A549 (cell line): ENCODE measurements at regions of chr14 and their contacts with region 1.

Region 1: DNA sequence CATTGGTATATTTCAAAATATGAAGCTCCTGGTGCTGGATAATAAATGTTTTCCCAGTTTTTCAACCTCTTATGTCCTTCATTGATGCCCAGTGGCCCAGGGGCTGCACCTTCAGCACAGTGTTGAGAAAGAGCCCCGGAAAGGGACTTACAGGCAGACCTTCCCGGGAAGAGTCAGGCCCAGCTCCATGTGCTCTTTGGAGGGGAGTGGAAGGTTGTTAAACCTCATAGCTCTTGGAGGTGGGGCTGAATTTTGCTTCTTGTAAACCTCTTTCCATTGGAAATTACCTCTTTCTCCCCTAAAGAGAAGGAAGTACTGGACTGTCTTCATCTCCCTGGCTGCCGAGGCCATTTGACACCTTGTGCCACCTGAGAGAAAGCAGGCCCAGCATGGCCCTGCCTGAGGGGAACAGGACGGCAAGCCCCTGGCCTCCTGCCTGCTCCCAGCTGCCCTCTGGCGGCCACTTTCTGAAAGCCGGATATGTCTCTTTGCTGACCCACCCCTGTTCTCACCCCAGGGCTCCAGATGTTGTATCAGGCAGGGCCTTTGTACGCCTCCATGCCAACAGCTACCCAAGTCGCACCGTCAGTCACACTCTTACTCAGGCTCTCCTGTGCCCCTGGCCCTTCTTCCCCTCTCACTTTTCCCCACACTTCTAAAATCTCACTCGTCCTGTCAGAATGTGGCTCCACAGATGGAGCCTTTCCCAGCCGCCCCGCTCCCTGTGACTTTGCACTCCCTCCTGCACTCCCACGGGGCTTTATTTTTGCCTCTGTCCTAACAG is 43.0 kb downstream of the EVL start:
- DNase-seq: peak; percentile 69 to 88
- ATAC-seq: peak; percentile 91 to 98
- H3K4me3 ChIP-seq: no peak overlapping the region
- H3K27ac ChIP-seq: peak overlapping the region; percentile 51 to 56; a peak in 4 of 6 replicates
- H3K4me1 ChIP-seq: peaks cover 27% of the 10 kb centered on the region
- CTCF ChIP-seq: peak; percentile 90
- EP300 ChIP-seq: no peak
- POLR2A ChIP-seq: no peak
- RAD21 ChIP-seq: peak; percentile 86 to 88

Region 2: GRCh38 chr14:99850709-99851108 is 257.5 kb before region 1 on chr14:
- CTCF ChIA-PET with region 1: no interaction called
- POLR2A ChIA-PET with region 1: no interaction called
- DNase-seq: no peak
- ATAC-seq: no peak
- H3K4me3 ChIP-seq: no peak overlapping the region
- H3K27ac ChIP-seq: no peak overlapping the region
- H3K4me1 ChIP-seq: peaks cover 4% of the 10 kb centered on the region; the same call in 1 of the 3 replicates
- CTCF ChIP-seq: no peak
- EP300 ChIP-seq: no peak
- POLR2A ChIP-seq: no peak
- RAD21 ChIP-seq: no peak

Region 3: DNA sequence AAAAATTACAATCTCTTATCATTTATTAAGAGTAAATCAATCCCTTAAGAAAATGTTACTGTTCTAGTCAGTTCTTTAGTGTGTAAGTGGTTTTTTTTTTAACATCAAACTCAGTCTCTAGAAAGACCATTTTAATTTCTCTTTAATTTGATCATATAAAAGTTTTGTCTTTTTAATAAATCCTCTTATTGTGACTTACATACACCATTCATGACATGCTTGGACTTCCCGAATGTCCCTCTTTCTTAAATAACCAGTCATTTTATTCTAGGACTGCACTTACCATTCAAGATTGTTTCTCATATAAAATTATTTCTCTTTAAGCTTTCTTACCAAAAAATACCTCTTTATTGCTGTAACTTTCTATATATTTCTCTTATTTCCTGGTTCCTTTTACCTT is 103.8 kb before region 1 on chr14:
- CTCF ChIA-PET with region 1: interaction called, 11 read pairs
- POLR2A ChIA-PET with region 1: no interaction called
- DNase-seq: peak in 1 of 2 experiments; percentile 51
- ATAC-seq: no peak
- H3K4me3 ChIP-seq: no peak overlapping the region
- H3K27ac ChIP-seq: no peak overlapping the region
- H3K4me1 ChIP-seq: no peaks in the 10 kb centered on the region
- CTCF ChIP-seq: no peak
- EP300 ChIP-seq: no peak
- POLR2A ChIP-seq: no peak
- RAD21 ChIP-seq: no peak

Region 4: GRCh38 chr14:100031536-100032281 is 76.5 kb before region 1 on chr14:
- CTCF ChIA-PET with region 1: interaction called, 29 read pairs
- POLR2A ChIA-PET with region 1: no interaction called
- DNase-seq: peak; percentile 91 to 96
- ATAC-seq: peak; percentile 91 to 93
- H3K4me3 ChIP-seq: peak overlapping the region; percentile 41
- H3K27ac ChIP-seq: peak overlapping the region; percentile 95 to 96
- H3K4me1 ChIP-seq: peaks cover 61% of the 10 kb centered on the region
- CTCF ChIP-seq: peak; percentile 57
- EP300 ChIP-seq: peak; percentile 35 to 78; a peak in 3 of 5 replicates
- POLR2A ChIP-seq: no peak
- RAD21 ChIP-seq: peak in 1 of 2 experiments; percentile 18; a peak in 3 of 5 replicates

Region 5: GRCh38 chr14:100056964-100057795 is 51.1 kb before region 1 on chr14:
- CTCF ChIA-PET with region 1: interaction called, 19 read pairs
- POLR2A ChIA-PET with region 1: no interaction called
- DNase-seq: peak; percentile 23 to 28
- ATAC-seq: peak; percentile 64 to 66; a peak in 4 of 6 replicates
- H3K4me3 ChIP-seq: no peak overlapping the region
- H3K27ac ChIP-seq: no peak overlapping the region
- H3K4me1 ChIP-seq: no peaks in the 10 kb centered on the region
- CTCF ChIP-seq: peak; percentile 11; the same call in 1 of the 3 replicates
- EP300 ChIP-seq: no peak
- POLR2A ChIP-seq: no peak
- RAD21 ChIP-seq: peak; percentile 25 to 39; a peak in 3 of 5 replicates

Region 6: GRCh38 chr14:100078991-100079725 is 29.1 kb before region 1 on chr14:
- CTCF ChIA-PET with region 1: interaction called, 52 read pairs
- POLR2A ChIA-PET with region 1: no interaction called
- DNase-seq: no peak
- ATAC-seq: peak; percentile 38 to 63; a peak in 3 of 6 replicates
- H3K4me3 ChIP-seq: no peak overlapping the region
- H3K27ac ChIP-seq: 0 out of 6 replicates have a peak overlapping the region, but pooled peaks of 1 of the 2 experiments have one; percentile 15
- H3K4me1 ChIP-seq: no peaks in the 10 kb centered on the region
- CTCF ChIP-seq: no peak
- EP300 ChIP-seq: no peak
- POLR2A ChIP-seq: no peak
- RAD21 ChIP-seq: 0 out of 5 replicates have a peak, but pooled peaks have one; percentile 3 to 11

Region 7: DNA sequence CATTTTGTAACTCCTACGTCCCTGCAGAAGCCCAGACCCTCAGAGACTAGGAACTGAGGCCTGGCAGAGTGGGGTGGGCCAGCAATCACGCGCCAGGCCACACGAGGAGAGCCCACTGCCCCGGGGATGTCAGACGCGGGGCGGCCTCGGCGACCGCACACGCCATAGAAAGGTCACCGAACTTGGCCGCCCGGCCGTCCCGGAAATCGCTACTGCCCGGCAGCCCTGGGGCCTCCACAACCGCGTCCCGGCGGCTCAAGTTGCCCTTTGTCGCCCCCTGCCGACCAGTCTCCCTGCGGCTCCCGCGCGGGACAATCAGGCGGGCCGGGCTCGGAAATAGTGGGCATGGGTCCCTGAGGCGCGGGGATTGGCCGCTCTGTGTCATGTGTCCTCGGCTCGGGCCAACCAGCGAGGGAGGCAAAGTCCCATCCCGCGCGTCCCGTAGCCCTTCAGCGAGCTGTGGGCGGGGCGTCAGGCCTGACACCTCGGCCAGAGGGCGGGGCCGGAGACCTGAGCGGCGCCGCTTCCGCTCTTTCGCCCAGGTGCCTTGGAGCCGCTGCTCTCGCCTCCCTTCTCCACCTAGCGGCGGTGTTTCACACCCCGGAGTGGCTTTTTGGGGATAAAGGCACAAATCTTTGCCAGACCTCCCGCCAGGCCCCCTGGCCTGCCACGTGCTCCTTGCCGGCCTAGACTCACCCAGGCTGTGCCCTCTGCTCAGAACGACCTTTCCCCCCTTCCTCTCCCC is 84.6 kb after region 1 on chr14:
- CTCF ChIA-PET with region 1: interaction called, 32 read pairs
- POLR2A ChIA-PET with region 1: interaction called, 3 read pairs
- DNase-seq: peak; percentile 99
- ATAC-seq: peak; percentile 99 to 100
- H3K4me3 ChIP-seq: peak overlapping the region; percentile 33
- H3K27ac ChIP-seq: peak overlapping the region; percentile 85 to 92
- H3K4me1 ChIP-seq: peaks cover 15% of the 10 kb centered on the region
- CTCF ChIP-seq: peak; percentile 84
- EP300 ChIP-seq: no peak
- POLR2A ChIP-seq: peak; percentile 39
- RAD21 ChIP-seq: peak; percentile 83 to 94

Region 8: DNA sequence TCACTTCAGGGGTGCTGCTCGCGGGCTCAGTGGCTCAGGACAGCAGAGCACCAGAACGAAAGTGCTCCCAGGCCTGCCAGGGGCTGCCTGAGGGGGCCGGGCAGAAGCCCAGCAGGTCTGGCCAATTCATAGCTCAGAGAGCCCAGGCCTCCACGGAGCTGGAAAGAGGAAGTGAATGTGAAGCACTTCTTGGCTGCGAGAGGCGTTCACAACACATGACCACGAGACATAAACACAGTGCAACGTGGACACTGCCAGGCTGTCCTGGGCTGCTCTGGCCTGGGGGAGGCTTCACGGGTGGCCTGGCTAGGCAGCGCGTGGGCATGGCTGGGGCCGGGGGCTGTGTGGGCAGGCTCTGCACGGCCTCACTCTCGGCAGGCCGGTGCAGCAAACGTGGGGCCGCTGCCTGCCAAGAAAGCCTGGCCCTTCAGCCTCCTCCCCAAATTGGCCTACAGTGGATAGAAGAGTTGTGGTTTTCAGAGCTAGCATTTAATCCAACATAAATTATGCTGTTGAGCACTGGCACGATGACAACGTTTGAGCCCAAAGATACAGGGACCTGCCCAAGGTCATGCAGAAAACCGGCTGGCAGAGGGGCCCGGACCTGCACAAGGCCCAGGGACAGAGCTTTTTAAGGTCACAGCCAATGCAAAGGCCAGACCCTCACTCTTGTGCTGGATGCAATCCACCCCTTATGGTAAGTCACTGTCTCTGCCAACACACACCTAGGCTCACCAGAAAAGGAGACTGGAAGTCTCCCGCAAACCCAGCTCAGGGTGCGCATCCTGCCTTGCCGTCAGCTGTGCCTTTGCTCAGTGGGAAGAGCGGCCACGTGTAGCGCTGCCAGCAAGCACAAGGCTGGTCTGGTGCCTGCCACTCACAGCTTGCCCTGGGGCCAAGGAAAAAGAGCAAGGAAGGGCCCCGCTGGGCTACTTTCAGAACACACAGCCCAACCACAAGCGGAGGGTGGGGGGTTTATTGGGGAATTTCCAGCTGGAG is 189.4 kb after region 1 on chr14:
- CTCF ChIA-PET with region 1: no interaction called
- POLR2A ChIA-PET with region 1: no interaction called
- DNase-seq: no peak
- ATAC-seq: peak in 1 of 2 experiments; percentile 17; a peak in 1 of 6 replicates
- H3K4me3 ChIP-seq: no peak overlapping the region
- H3K27ac ChIP-seq: no peak overlapping the region
- H3K4me1 ChIP-seq: peaks cover 4% of the 10 kb centered on the region; the same call in 2 of the 3 replicates
- CTCF ChIP-seq: no peak
- EP300 ChIP-seq: no peak
- POLR2A ChIP-seq: no peak
- RAD21 ChIP-seq: no peak